Adrenal gland (tissue), 19 donors: ENCODE measurements at regions of chr15 and their contacts with region 1.

Region 1: GRCh38 chr15:77821188-77821958 is 188.7 kb upstream of the LINGO1 start:
- DNase-seq: peak; percentile 47 to 80 (median 67)
- H3K4me3 ChIP-seq: no peak overlapping the region
- H3K27ac ChIP-seq: no peak overlapping the region
- H3K4me1 ChIP-seq: peaks cover 4 to 9% of the 10 kb centered on the region in 2 donors
- H3K27me3 ChIP-seq: peaks cover 47% of the 10 kb centered on the region
- CTCF ChIP-seq: peak; percentile 46 to 80 (median 66)
- POLR2A ChIP-seq: no peak

Region 2: GRCh38 chr15:77617476-77618230 is 203.7 kb before region 1 on chr15:
- intact Hi-C with region 1: no loop called
- DNase-seq: no peak
- H3K4me3 ChIP-seq: no peak overlapping the region
- H3K27ac ChIP-seq: no peak overlapping the region
- H3K4me1 ChIP-seq: no peaks in the 10 kb centered on the region
- H3K27me3 ChIP-seq: no peaks in the 10 kb centered on the region
- CTCF ChIP-seq: no peak
- POLR2A ChIP-seq: no peak

Region 3: GRCh38 chr15:77633134-77633912 is 188.1 kb before region 1 on chr15:
- intact Hi-C with region 1: loop called (anchors 5 kb)
- DNase-seq: peak; percentile 79 to 92 (median 88)
- H3K4me3 ChIP-seq: peak overlapping the region in 2 of 4 donors; percentile 35 to 55
- H3K27ac ChIP-seq: no peak overlapping the region
- H3K4me1 ChIP-seq: peaks cover 5 to 10% of the 10 kb centered on the region in 2 donors
- H3K27me3 ChIP-seq: peaks cover 20% of the 10 kb centered on the region
- CTCF ChIP-seq: peak; percentile 98 to 100 (median 99)
- POLR2A ChIP-seq: no peak

Region 4: DNA sequence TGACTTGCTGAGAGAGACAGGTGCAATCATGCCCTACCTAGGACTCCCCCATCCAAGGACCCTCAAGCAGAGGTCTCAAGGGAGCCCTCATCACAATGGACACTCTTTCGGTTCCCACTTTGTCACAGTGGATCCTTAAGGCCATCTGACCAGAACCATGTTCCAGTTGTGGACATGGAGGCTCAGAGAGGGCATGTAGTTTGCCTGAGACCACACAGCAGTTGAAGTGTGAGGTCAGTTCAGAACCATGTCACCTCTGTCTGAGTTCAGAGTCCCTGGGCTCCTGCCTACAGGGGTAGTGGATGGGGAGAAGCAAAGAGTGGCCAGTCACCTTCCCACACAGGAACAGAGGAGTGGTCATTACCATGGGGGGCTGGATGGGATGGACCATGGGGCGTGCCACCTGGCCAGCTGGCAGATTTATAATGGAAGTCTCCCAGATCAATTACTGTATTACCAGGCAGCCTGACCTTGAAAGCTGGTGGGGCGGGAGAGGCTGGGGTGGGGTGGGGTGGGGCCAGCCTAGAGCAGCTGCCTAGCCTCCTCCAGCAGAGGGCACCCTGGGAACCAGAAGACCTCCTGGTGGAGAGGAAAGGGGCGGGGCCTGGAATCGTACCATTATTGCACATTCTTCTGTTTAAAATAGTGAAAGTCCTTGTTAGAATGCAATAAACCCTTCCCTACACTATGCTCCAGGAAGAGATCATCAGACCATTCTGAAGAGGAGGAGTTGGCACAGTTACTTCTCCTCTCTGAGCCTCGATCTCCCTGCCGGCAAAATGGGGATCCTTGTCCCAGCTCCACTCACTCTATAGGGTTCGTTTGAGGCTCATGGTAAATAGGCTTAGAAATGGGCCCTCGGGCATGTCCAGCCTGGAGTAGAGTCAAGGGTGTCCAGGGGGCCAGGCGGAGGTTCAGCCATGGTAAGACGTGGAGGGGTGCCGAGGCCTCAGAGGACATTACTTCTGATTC is 161.7 kb before region 1 on chr15:
- intact Hi-C with region 1: loop called in 1 of 2 experiments (anchors 5 kb)
- DNase-seq: peak; percentile 67 to 92 (median 87)
- H3K4me3 ChIP-seq: no peak overlapping the region
- H3K27ac ChIP-seq: no peak overlapping the region
- H3K4me1 ChIP-seq: no peaks in the 10 kb centered on the region
- H3K27me3 ChIP-seq: no peaks in the 10 kb centered on the region
- CTCF ChIP-seq: peak in 5 of 6 experiments; percentile 20 to 60 (median 31)
- POLR2A ChIP-seq: no peak

Region 5: DNA sequence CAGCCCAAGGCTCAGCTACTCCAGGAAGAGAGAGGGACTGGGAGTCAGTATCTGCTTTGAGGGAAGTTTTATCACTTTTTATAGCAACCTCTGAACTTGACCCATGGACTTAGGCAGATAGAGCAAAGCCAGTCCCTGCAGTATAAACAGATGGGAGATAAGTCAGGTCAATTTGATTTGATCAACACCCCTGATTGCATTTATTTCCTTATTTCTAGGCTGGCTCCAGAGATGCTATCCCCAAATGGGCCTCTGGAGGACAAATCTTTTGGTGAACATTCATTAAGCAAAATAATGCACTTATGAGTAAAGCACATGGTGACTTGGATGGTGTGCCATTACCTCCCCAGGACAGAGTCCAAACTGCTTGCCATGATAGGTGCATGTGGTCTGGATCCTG is 318.9 kb after region 1 on chr15:
- intact Hi-C with region 1: no loop called
- DNase-seq: no peak
- H3K4me3 ChIP-seq: no peak overlapping the region
- H3K27ac ChIP-seq: no peak overlapping the region
- H3K4me1 ChIP-seq: no peaks in the 10 kb centered on the region
- H3K27me3 ChIP-seq: no peaks in the 10 kb centered on the region
- CTCF ChIP-seq: no peak
- POLR2A ChIP-seq: no peak